ENCODE measurements at regions of chr5 and their contacts with region 1.

Region 1: GRCh38 chr5:73215891-73216610 is 43.1 kb downstream of the TMEM174 start:
- DNase-seq: peak; percentile 71
- H3K4me3 Mint-ChIP-seq: no peak overlapping the region
- H3K27ac Mint-ChIP-seq: no peak overlapping the region
- H3K4me1 Mint-ChIP-seq: peaks cover 13% of the 10 kb centered on the region
- H3K27me3 Mint-ChIP-seq: peaks cover 70% of the 10 kb centered on the region

Region 2: GRCh38 chr5:73229209-73229661 is 13.2 kb after region 1 on chr5:
- CTCF ChIA-PET with region 1: interaction called, 10 read pairs
- DNase-seq: no peak
- H3K4me3 Mint-ChIP-seq: no peak overlapping the region
- H3K27ac Mint-ChIP-seq: no peak overlapping the region
- H3K4me1 Mint-ChIP-seq: peaks cover 17% of the 10 kb centered on the region
- H3K27me3 Mint-ChIP-seq: peaks cover 66% of the 10 kb centered on the region

Region 3: DNA sequence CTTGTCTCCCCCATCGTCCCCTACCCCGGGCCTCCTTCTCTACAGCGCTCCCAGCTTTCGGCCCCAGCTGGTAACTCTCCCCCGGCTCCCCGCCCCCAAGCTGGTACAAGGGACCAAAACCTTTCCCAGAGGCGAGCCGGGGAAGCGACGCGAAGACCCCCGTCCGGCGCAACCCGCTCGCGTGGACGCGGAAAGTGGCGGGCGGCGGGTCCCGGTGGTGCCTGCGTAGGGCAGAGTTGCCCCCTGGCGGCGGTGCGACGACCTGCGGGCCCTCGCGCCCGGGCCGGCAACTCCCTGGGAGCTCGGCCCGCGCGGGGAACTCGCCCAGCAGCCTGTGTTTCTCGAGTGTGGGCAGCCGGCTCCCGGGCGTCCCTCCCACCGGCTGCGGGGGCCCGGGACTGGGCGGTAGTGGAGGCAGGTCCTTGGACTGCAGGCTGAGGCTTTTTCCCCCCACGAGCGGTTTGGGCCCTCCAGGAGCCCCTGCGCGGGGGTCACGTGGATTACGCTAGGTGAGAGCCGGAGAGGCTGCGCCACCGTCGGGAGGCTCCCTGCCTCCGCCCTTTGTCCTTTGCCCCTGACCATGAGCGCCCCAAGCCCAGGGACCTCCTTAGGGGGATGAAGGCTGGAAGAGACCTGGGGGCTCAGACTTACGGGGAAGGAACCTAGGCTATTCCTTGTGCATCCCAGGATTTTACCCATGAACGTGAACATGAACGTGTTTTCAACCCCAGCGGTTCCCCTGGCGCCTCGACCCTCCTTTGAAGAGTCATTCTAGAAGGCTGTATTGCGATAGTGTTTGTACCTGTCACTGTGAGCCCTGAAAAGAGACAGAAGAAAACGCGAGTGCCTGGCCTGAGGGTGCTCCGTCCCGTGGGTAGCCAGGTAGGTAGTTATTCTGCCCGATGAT is 235.4 kb after region 1 on chr5:
- CTCF ChIA-PET with region 1: interaction called, 16 read pairs
- DNase-seq: peak; percentile 71
- H3K4me3 Mint-ChIP-seq: no peak overlapping the region
- H3K27ac Mint-ChIP-seq: peak overlapping the region; percentile 83
- H3K4me1 Mint-ChIP-seq: peaks cover 20% of the 10 kb centered on the region
- H3K27me3 Mint-ChIP-seq: peaks cover 79% of the 10 kb centered on the region

Measured in activated naive CD4-positive, alpha-beta T cell treated with anti-CD3 and anti-CD28 coated beads, Interleukin-2, amount 10 ng/mL, durations not matched to agents 7 days and 5 days (primary cell).